ENCODE measurements at regions of chr10 and their contacts with region 1.

Region 1: DNA sequence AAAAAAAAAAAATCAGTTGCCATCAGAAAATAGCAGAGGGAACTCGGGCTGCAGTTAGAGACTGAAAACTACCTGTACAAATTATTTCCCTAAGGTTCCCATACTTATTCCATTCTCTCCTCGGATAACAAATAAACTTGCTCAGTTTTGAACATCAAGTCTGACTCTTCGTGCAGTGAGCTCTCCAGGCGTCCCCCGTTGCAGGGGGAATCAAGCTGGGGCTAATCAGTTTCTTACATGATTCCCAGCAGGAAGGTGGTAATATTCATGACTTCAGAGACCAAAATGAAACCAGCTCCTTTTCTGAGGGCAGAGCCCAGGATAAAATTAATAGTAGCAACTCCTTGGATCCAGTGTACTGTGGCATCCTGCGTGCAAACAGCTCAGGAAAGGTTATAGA is 135.3 kb downstream of the FRMD4A start:
- DNase-seq: no peak
- H3K4me3 ChIP-seq: no peak overlapping the region
- H3K27ac ChIP-seq: no peak overlapping the region
- H3K4me1 ChIP-seq: no peaks in the 10 kb centered on the region
- CTCF ChIP-seq: no peak

Region 2: GRCh38 chr10:12847361-12847975 is 1348.0 kb before region 1 on chr10:
- CTCF ChIA-PET with region 1: no interaction called
- POLR2A ChIA-PET with region 1: no interaction called
- intact Hi-C with region 1: no loop called
- DNase-seq: peak; percentile 54
- H3K4me3 ChIP-seq: no peak overlapping the region
- H3K27ac ChIP-seq: no peak overlapping the region
- H3K4me1 ChIP-seq: no peaks in the 10 kb centered on the region
- CTCF ChIP-seq: peak; percentile 82

Region 3: DNA sequence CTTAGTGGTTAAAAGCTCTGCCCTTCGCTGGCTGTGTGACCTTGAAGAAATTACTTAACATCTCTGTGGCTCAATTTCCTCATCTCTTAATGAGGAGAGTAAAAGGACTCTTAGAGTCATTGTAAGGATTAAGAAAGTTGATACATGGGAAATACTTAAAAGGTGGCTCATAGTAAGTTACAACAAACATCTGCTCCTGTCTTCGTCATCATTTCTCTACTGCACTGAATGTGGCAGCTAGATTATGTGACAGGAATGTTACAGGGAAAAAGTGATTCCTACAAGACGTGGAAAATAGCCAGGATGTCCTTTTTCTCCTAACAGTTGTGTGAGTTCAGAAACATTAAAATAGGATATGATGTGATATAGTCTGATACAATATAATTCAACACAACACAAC is 49.4 kb before region 1 on chr10:
- CTCF ChIA-PET with region 1: no interaction called
- POLR2A ChIA-PET with region 1: no interaction called
- intact Hi-C with region 1: no loop called
- DNase-seq: no peak
- H3K4me3 ChIP-seq: no peak overlapping the region
- H3K27ac ChIP-seq: no peak overlapping the region
- H3K4me1 ChIP-seq: no peaks in the 10 kb centered on the region
- CTCF ChIP-seq: no peak

Region 4: DNA sequence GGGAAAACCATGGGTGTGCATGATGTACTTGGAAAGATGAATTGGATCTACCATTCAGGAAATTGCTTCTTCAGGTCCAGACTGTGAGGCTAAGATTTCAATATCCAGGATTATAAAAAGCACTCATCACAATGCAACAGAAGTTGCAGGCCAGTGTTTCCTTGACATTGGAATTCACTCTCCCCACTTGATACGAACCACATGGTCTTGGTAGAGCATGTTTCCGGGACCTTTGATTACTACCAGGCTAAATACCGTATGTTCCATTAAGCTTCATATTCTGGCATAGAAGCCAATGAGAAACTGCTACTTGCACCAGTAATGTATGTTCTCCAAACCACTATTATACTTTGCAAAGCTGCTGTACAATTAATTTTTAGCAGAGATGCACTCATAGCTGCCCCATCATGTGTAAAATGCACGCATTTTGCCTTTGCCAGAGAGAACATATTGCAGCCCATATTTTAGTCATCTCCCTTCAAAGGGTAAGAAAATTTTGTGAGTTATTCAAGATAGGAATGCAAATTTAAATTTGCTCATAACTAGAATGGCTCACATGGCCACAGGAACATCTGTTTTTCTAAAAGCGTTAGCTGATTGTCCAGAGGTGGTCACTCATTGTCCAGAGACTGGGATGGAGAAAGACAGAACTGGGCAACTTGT is 127.2 kb after region 1 on chr10:
- CTCF ChIA-PET with region 1: no interaction called
- POLR2A ChIA-PET with region 1: no interaction called
- intact Hi-C with region 1: loop called (anchors 5 kb)
- DNase-seq: no peak
- H3K4me3 ChIP-seq: no peak overlapping the region
- H3K27ac ChIP-seq: no peak overlapping the region
- H3K4me1 ChIP-seq: no peaks in the 10 kb centered on the region
- CTCF ChIP-seq: no peak

Region 5: DNA sequence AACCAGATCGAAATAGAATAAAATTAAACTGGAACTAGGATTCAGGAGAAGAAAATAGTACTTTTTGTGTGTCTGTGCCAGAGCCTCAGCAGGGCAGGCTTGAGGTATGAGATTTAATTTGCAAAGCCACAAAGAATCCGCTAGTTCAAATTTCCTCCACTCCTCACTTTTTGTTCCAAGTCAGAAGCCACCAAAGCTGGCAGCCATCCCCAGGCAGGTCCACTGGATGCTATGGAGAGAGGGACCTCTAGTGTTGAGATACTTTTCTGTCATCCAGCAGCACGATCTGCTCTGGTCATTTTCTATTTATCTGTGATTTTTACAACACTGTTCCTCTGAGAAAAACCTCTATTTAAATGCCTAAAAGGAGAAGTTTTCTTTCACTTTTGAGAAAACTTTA is 283.2 kb after region 1 on chr10:
- CTCF ChIA-PET with region 1: no interaction called
- POLR2A ChIA-PET with region 1: no interaction called
- intact Hi-C with region 1: loop called (anchors 5 kb)
- DNase-seq: peak; percentile 18
- H3K4me3 ChIP-seq: no peak overlapping the region
- H3K27ac ChIP-seq: no peak overlapping the region
- H3K4me1 ChIP-seq: no peaks in the 10 kb centered on the region
- CTCF ChIP-seq: peak; percentile 66